Adrenal gland (tissue), 19 donors: ENCODE measurements at regions of chr12 and their contacts with region 1.

Region 1: GRCh38 chr12:70576346-70577282 is 60.6 kb downstream of the PTPRB start:
- DNase-seq: peak in 1 of 7 donors; percentile 22
- H3K4me3 ChIP-seq: no peak overlapping the region
- H3K27ac ChIP-seq: no peak overlapping the region
- H3K4me1 ChIP-seq: peaks cover 3 to 4% of the 10 kb centered on the region in 2 donors
- H3K27me3 ChIP-seq: no peaks in the 10 kb centered on the region
- CTCF ChIP-seq: peak; percentile 75 to 85 (median 80)
- POLR2A ChIP-seq: no peak

Region 2: GRCh38 chr12:69879041-69879960 is 697.3 kb before region 1 on chr12:
- intact Hi-C with region 1: loop called in 1 of 2 experiments (anchors 5 kb)
- DNase-seq: peak; percentile 60 to 92 (median 82)
- H3K4me3 ChIP-seq: peak overlapping the region in 1 of 4 donors; percentile 27
- H3K27ac ChIP-seq: no peak overlapping the region
- H3K4me1 ChIP-seq: peaks cover 2 to 9% of the 10 kb centered on the region in 2 donors
- H3K27me3 ChIP-seq: no peaks in the 10 kb centered on the region
- CTCF ChIP-seq: peak; percentile 68 to 91 (median 86)
- POLR2A ChIP-seq: no peak

Region 3: GRCh38 chr12:69897445-69898143 is 679.0 kb before region 1 on chr12:
- intact Hi-C with region 1: loop called (anchors 2 to 5 kb)
- DNase-seq: no peak
- H3K4me3 ChIP-seq: no peak overlapping the region
- H3K27ac ChIP-seq: no peak overlapping the region
- H3K4me1 ChIP-seq: peaks cover 0 to 5% of the 10 kb centered on the region in 2 donors
- H3K27me3 ChIP-seq: no peaks in the 10 kb centered on the region
- CTCF ChIP-seq: no peak
- POLR2A ChIP-seq: no peak

Region 4: DNA sequence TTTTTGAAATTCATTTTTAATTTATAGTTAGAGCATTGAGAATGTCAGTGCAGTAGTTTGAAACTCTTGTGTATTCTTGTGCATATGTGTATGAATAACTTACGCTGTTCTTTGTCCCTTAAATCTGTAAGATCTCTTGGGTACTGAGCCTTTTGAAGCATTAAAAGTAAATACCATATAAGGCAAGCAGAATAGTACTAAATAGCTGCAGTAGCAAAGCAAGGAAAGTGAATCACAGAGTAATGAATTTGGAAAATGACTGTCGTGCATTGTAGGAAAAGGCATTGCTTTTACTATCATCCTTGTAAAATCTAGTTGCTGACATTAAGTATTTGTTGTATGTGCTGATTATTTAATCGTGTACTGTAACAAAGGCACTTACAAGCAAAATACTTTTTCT is 321.3 kb before region 1 on chr12:
- intact Hi-C with region 1: loop called in 1 of 2 experiments (anchors 10 kb)
- DNase-seq: no peak
- H3K4me3 ChIP-seq: peak overlapping the region in 1 of 4 donors; percentile 24
- H3K27ac ChIP-seq: no peak overlapping the region
- H3K4me1 ChIP-seq: peaks cover 4 to 40% of the 10 kb centered on the region in 2 donors
- H3K27me3 ChIP-seq: no peaks in the 10 kb centered on the region
- CTCF ChIP-seq: no peak
- POLR2A ChIP-seq: no peak

Region 5: DNA sequence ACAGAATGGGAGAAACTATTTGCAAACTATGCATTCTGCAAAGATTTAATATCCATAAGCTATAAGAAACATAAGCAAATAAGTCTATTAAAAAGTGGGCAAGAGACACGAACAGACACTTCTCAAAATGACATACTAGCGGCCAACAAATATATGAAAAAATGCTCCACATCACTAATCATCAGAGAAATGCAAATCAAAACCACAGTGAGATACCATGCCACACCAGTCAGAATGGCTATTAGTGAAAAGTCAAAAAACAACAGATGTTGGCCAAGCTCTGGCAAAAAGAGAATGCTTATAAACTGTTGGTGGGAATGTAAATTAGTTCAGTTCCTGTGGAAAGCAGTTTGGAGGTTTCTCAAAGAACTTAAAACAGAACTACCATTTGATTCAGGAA is 89.2 kb before region 1 on chr12:
- intact Hi-C with region 1: no loop called
- DNase-seq: no peak
- H3K4me3 ChIP-seq: no peak overlapping the region
- H3K27ac ChIP-seq: no peak overlapping the region
- H3K4me1 ChIP-seq: no peaks in the 10 kb centered on the region
- H3K27me3 ChIP-seq: no peaks in the 10 kb centered on the region
- CTCF ChIP-seq: no peak
- POLR2A ChIP-seq: no peak